ENCODE measurements at regions of chr13 and their contacts with region 1.

Region 1: DNA sequence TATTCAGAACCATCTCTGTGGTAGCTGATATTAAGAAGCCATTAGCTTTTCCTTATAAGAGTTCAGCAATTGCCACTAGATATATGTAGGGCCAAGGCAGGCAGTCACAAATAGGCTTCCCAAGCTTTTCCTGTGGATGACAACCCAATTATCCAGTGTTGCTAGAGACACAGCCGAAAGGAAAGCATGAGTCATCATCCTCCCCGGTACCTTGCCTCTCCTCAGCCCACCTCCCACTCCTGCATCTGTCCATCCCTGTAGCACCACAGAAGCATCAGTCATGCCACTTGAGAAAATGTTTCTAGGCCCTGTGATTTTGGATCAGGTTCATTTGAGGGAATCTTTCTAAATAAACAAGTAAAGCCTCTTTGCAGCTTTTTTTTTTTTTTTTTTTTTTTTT is 204.3 kb downstream of the DNAJC15 start:
- DNase-seq: no peak
- H3K4me3 ChIP-seq: no peak overlapping the region
- H3K27ac ChIP-seq: no peak overlapping the region
- H3K4me1 ChIP-seq: peaks cover 5% of the 10 kb centered on the region; the same call in 1 of the 2 replicates
- H3K27me3 ChIP-seq: no peaks in the 10 kb centered on the region
- CTCF ChIP-seq: no peak

Region 2: DNA sequence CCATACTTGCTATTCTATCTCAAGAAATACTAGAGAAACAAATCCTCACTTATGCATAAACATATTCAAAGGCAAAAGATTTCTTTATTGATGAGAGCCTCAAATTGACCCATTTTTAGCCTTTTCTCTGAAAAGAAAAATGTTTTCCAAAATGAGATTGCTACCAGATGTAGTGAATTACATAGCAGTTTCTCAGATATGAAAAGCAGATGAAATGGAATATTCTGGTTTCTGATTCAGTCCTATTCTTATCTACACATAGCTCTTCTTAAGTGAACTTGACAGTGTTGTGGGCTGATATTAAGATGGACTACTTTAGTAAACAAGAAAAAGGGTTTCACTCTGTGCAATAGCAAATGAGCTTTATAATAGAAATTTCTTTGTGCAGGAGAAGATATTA is 20.9 kb before region 1 on chr13:
- CTCF ChIA-PET with region 1: no interaction called
- POLR2A ChIA-PET with region 1: no interaction called
- intact Hi-C with region 1: loop called (anchors 1 kb)
- DNase-seq: no peak
- H3K4me3 ChIP-seq: no peak overlapping the region
- H3K27ac ChIP-seq: no peak overlapping the region
- H3K4me1 ChIP-seq: no peaks in the 10 kb centered on the region
- H3K27me3 ChIP-seq: no peaks in the 10 kb centered on the region
- CTCF ChIP-seq: no peak

Measured in PC-9 (cell line).